PC-3 (cell line): ENCODE measurements at regions of chr20 and their contacts with region 1.

Region 1: DNA sequence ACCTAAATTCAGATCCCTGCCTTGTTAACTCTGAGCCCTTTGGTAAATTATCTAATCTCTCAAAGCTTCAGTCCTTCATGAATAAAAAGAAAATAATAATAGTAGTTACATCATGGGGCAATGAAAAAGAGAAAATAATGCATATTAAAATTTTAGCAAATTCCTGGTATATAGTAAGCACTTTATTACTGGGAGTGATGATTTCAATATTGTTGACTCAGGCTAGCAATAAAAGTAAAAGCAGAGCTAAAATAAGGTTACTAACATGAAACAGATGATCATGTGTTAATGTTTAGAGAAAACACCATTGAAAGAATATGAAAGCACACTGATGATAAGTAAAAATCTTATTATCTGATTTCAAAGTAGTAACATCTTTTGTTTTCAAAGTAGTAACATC is 13.6 kb downstream of the GINS1 start:
- DNase-seq: no peak
- ATAC-seq: peak; percentile 54
- H3K4me3 ChIP-seq: no peak overlapping the region
- H3K27ac ChIP-seq: no peak overlapping the region
- H3K4me1 ChIP-seq: peaks cover 8% of the 10 kb centered on the region
- H3K27me3 ChIP-seq: no peaks in the 10 kb centered on the region
- CTCF ChIP-seq: no peak

Region 2: GRCh38 chr20:25527949-25528348 is 106.8 kb after region 1 on chr20:
- CTCF ChIA-PET with region 1: no interaction called
- POLR2A ChIA-PET with region 1: interaction called, 12 read pairs
- intact Hi-C with region 1: no loop called
- DNase-seq: no peak
- ATAC-seq: no peak
- H3K4me3 ChIP-seq: no peak overlapping the region
- H3K27ac ChIP-seq: no peak overlapping the region
- H3K4me1 ChIP-seq: peaks cover 25% of the 10 kb centered on the region
- H3K27me3 ChIP-seq: no peaks in the 10 kb centered on the region
- CTCF ChIP-seq: no peak